ENCODE measurements at regions of chr16 and their contacts with region 1.

Region 1: DNA sequence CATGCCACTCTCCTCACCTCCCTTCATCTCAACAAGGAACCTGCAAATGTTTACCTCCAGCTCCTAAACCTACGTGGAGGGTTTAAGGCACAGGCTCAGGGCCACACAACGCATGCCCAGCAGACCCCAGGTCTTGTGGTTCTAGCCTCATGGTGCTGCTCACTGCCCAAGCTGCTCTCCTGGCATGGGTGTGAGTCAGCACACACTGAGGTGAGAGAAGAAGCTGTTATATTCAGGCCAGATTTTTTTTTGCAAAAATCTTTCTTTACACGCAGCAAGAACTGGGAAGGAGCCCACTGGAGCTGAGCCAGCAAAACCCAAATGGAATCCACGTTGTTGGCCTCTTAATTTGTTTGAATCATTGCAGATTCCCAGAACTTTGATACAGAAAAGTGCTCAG is 5.5 kb upstream of the C16orf96 start:
- DNase-seq: no peak
- H3K4me3 ChIP-seq: no peak overlapping the region
- H3K27ac ChIP-seq: no peak overlapping the region
- H3K4me1 ChIP-seq: peaks cover 0 to 3% (median under 1%) of the 10 kb centered on the region in 4 experiments; a peak in 1 of 7 replicates
- H3K27me3 ChIP-seq: no peaks in the 10 kb centered on the region
- CTCF ChIP-seq: no peak
- EP300 ChIP-seq: no peak
- POLR2A ChIP-seq: no peak
- RAD21 ChIP-seq: no peak

Region 2: DNA sequence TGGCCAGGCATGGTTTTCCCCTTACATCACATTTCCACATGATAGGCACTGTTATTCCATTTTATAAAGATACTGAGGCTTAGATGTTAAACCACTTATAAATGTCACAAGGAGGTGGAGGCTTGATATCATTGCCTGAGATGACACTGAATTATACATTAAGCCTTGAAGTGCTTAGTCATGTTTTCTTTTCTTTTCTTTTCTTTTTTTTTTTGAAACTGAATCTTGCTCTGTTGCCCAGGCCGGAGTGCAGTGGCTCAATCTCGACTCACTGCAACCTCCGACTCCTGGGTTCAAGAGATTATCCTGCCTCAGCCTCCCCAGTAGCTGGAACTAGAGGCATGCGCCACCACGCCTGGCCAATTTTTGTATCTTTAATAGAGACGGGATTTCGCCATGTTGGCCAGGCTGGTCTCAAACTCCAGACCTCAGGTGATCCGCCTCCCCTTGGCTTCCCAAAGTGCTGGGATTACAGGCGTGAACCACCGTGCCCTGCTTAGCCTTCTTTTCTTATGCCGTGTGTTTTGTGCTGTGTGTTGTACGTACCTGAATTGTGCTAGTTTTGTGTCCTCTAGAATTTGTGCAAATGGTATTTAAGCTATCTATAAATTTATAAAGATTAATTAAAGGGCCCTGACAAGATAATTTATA is 123.7 kb before region 1 on chr16:
- CTCF ChIA-PET with region 1: no interaction called
- POLR2A ChIA-PET with region 1: no interaction called
- DNase-seq: no peak
- H3K4me3 ChIP-seq: peak overlapping the region; percentile 73 to 98 (median 86); a peak in 7 of 8 replicates
- H3K27ac ChIP-seq: no peak overlapping the region
- H3K4me1 ChIP-seq: peaks cover 0 to 5% (median 2%) of the 10 kb centered on the region in 4 experiments; a peak in 3 of 7 replicates
- H3K27me3 ChIP-seq: no peaks in the 10 kb centered on the region
- CTCF ChIP-seq: no peak
- EP300 ChIP-seq: no peak
- POLR2A ChIP-seq: no peak
- RAD21 ChIP-seq: no peak

Region 3: GRCh38 chr16:4538350-4539235 is 12.0 kb before region 1 on chr16 and contains the start of gene CDIP1:
- CTCF ChIA-PET with region 1: interaction called, 968 read pairs
- POLR2A ChIA-PET with region 1: interaction called, 5 read pairs
- DNase-seq: peak; percentile 85 to 97
- H3K4me3 ChIP-seq: peak within 1 kb of the TSS; percentile 69 to 87 (median 80)
- H3K27ac ChIP-seq: peak within 1 kb of the TSS; percentile 84
- H3K4me1 ChIP-seq: peaks cover 0 to 8% (median 5%) of the 10 kb centered on the region in 4 experiments; a peak in 5 of 7 replicates
- H3K27me3 ChIP-seq: peaks cover 1 to 14% (median 11%) of the 10 kb centered on the region in 4 experiments
- CTCF ChIP-seq: no peak
- EP300 ChIP-seq: 0 out of 3 replicates have a peak, but pooled peaks of 1 of the 2 experiments have one; percentile 8
- POLR2A ChIP-seq: peak in 1 of 2 experiments; percentile 86; a peak in 2 of 3 replicates
- RAD21 ChIP-seq: no peak
- total RNA-seq, gene CDIP1: 73.7 and 76.3 TPM in 2 replicates

Region 4: GRCh38 chr16:4561596-4561995 is 11.0 kb after region 1 on chr16:
- CTCF ChIA-PET with region 1: interaction called, 74 read pairs
- POLR2A ChIA-PET with region 1: interaction called, 7 read pairs
- DNase-seq: no peak
- H3K4me3 ChIP-seq: no peak overlapping the region
- H3K27ac ChIP-seq: no peak overlapping the region
- H3K4me1 ChIP-seq: no peaks in the 10 kb centered on the region
- H3K27me3 ChIP-seq: no peaks in the 10 kb centered on the region
- CTCF ChIP-seq: no peak
- EP300 ChIP-seq: no peak
- POLR2A ChIP-seq: no peak
- RAD21 ChIP-seq: no peak

Measured in H1 (cell line).